ENCODE measurements at regions of chr6 and their contacts with region 1.

Region 1: DNA sequence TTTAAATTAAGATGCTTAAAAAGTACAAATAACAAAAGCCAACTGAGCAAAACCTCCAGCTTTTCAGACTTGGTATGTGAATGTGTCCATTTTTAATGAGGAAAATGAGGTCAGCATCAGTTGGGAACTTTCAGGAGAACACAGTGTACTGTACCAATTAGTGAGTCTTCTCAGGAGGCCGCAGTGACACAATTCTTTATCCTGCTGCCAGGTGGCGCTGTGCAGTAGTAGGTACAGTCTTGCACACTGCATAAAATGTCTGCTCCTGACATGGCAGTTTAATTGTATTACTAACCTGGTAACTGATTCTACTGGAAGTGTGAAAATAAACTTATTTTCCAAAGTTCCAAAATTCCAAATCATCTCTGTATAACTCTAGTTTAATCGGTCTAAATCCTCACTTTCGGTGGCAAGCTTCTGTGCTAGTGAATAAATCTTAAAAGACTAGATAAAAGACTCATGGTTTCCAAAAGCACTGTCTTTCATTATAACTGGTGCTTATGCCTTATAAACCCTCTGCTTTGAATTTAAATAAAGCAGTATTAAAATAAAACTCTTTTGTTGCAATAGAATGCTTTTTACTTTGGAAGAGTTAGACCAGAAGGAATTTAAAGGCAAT is 214.8 kb upstream of the MMS22L start:
- DNase-seq: peak; percentile 16
- H3K4me3 ChIP-seq: no peak overlapping the region
- CTCF ChIP-seq: peak; percentile 89

Region 2: GRCh38 chr6:97129106-97129505 is 368.7 kb before region 1 on chr6:
- CTCF ChIA-PET with region 1: no interaction called
- POLR2A ChIA-PET with region 1: no interaction called
- DNase-seq: no peak
- H3K4me3 ChIP-seq: no peak overlapping the region
- CTCF ChIP-seq: no peak

Region 3: DNA sequence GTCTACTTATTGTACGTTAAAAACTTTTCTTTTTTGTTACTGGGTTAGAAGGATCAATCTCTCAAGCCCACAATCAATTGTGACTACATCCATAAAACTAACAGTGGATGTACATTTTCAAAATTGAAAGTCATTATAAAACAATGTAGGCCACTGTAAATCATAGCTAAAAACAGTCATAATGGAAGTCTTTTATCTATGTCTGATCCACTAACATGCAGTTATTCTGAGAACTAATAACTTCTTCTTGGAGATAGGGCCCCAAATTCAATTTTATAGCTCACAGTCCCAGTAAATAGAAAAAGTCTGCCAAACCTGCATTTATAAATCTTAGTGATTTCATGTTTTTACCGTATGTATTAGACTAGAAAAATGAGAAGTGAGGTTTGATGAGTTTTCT is 27.5 kb before region 1 on chr6:
- CTCF ChIA-PET with region 1: interaction called, 10 read pairs
- POLR2A ChIA-PET with region 1: no interaction called
- DNase-seq: no peak
- H3K4me3 ChIP-seq: no peak overlapping the region
- CTCF ChIP-seq: no peak

Region 4: GRCh38 chr6:97508646-97509045 is 10.8 kb after region 1 on chr6:
- CTCF ChIA-PET with region 1: interaction called, 16 read pairs
- POLR2A ChIA-PET with region 1: no interaction called
- DNase-seq: no peak
- H3K4me3 ChIP-seq: no peak overlapping the region
- CTCF ChIP-seq: no peak

Region 5: DNA sequence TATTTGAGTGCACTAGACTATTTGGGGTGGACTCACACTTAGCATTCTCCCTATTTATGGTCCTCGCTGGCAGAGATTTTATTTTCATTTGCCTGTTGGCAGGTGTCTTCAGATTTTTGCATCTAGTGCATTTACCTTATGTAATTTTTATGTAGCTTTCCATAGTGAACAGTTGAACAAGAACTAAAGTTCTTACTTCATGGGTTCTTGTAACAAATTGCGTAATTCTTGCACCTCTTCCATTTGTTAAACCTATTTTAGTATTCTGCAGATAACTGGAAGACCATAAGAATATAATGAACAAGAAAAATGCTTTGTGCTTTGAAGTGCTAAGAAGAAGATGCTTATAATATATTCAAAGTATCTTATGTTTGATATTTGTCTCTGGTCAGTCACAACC is 38.0 kb after region 1 on chr6:
- CTCF ChIA-PET with region 1: no interaction called
- POLR2A ChIA-PET with region 1: no interaction called
- DNase-seq: no peak
- H3K4me3 ChIP-seq: no peak overlapping the region
- CTCF ChIP-seq: no peak

Region 6: DNA sequence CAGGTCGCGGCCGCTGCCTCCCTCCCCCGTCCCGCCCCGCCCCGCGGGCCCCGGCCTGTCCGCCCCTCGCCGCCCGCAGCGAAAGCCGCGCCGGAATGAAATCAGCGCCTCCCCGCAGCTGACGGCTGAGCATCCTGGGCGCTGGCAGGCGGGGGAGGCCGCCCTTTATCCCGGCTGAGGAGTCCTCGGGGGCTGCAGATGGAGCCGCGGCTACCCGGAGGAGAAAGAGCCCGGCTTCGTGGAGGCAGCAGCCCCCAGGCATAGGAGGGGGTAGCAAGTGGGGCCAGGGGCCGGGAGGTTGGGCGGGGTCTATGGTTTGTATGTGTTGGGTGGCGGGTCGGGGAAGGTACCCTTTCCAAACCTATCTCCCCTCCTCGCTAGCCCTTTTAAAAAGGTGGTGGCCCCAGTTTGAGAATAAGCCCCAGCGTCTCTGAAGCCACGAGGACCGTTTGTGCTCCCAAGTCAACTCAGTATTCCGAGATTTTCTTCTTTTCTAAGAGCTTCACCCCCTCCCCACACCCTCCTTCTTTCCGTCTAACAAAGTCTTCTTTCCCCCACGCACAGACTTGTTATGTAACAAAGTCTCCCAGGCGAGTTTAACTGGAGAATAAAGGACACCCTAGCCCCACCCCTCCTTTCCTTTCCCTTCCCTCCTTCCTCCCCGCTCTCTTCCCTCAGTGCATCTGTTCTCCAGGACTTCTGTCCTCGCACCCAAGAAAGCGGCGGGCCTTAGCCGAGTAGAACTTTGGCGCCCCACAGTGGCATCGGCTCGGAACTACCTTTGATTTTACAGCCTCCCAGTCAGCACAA is 1347.6 kb after region 1 on chr6:
- CTCF ChIA-PET with region 1: interaction called, 42 read pairs
- POLR2A ChIA-PET with region 1: no interaction called
- DNase-seq: peak; percentile 23
- H3K4me3 ChIP-seq: peak overlapping the region; percentile 39
- CTCF ChIP-seq: peak; percentile 94

Region 7: GRCh38 chr6:99119109-99120031 is 1621.5 kb after region 1 on chr6:
- CTCF ChIA-PET with region 1: interaction called, 19 read pairs
- POLR2A ChIA-PET with region 1: no interaction called
- DNase-seq: no peak
- H3K4me3 ChIP-seq: no peak overlapping the region
- CTCF ChIP-seq: peak; percentile 61

Measured in AG04449 (cell line).